ENCODE measurements at regions of chr2 and their contacts with region 1.

Region 1: DNA sequence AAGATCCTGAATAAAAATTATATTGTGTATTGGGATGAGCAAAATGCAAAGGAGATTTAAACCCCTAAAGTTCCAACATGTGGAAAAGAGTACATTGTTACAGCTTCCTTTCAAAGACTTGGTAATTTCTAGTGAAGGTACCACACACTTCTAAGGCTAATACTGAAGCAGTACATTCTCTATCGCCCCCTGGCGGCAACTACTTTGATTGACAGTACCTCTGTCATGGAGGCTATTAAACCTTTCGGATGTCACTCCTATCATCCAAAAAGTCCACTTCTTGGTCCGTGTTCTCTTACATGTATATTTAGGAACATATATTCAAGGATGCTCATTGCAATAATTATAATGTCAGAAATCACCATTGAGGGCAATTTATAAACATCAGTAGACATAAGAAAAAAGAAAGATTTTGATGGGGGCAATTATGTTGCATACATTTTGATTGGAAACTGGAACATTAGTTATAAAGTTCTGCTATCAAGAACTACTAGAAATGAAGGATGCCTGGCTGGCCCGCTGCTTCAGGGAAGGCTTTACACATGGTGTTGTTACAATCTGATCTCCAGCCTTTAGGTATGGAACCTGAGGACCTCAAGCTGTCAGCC is 601.6 kb downstream of the CPS1 start:
- DNase-seq: peak; percentile 45
- H3K4me3 Mint-ChIP-seq: no peak overlapping the region
- H3K27ac Mint-ChIP-seq: no peak overlapping the region
- H3K4me1 Mint-ChIP-seq: no peaks in the 10 kb centered on the region
- H3K27me3 Mint-ChIP-seq: no peaks in the 10 kb centered on the region

Region 2: DNA sequence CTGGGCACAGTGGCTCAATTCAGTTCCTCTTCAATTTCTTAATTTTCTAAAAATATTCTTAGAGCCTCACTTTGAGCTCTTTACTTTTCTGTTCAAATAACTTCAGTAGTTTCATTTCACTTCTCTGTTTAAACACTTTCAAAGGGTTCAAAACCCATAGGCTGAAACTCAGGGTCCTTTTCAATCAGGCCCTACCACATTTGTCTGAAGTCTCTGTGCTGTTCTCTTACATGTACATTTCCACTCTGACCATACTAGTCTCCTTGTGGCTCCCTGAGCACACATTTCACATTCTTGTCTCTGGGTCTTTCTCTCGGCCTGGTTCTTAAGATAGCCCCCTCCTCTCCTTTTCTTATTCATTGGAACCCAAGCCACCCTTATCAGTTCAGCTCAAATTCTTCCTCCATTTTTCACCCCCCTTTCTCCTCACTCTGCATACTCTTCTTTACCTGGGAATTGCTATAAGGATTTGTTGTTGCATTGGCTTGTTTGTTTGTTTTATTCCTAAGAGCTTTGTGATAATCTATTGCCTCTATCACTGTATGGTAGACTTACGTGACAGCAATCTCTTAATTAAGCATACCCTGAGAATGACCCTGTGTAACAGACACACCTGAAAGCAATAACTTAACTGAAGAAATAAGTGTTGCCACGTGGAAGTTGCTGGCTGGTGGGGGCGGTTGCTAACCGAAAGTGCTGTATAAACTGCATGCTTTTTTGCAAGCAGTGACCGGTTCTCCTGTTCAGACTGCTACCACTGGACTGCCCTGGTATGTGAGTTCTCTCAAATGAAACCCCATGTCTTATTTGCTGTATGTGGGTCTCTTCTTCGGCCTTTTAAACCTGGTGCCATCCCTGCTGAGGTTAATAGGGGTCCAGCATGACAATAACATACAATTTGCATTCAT is 905.0 kb before region 1 on chr2:
- intact Hi-C with region 1: loop called (anchors 2 kb)
- DNase-seq: no peak
- H3K4me3 Mint-ChIP-seq: no peak overlapping the region
- H3K27ac Mint-ChIP-seq: no peak overlapping the region
- H3K4me1 Mint-ChIP-seq: no peaks in the 10 kb centered on the region
- H3K27me3 Mint-ChIP-seq: peaks cover 2% of the 10 kb centered on the region

Region 3: DNA sequence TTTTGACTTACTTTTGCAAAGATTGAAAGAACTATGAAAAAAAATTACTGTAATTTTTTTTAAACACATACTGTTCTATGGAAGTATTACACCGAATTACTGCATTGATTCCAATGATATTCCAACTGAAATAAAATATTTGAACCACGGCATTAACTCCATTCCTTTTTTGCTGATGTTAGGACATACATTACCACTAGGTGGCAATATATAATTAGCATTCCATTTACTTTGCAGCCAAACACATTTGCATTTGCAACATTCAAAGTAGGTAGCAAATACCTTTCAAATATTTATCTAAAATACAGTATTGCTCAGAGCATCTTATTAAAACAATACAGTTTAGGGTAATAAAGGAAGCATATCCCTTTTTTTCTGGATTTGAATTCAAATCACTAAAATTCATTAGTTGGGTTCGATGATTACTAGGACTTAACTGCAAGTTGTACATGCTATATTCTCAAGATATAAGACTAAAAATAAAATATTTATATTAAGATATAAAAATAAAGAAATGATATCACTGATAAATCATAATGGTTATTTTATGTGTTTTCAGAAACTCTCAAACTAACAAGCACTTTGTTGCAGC is 712.7 kb before region 1 on chr2:
- intact Hi-C with region 1: loop called (anchors 10 kb)
- DNase-seq: no peak
- H3K4me3 Mint-ChIP-seq: no peak overlapping the region
- H3K27ac Mint-ChIP-seq: no peak overlapping the region
- H3K4me1 Mint-ChIP-seq: peaks cover 11% of the 10 kb centered on the region
- H3K27me3 Mint-ChIP-seq: no peaks in the 10 kb centered on the region

Region 4: GRCh38 chr2:210577263-210578071 is 580.5 kb before region 1 on chr2:
- intact Hi-C with region 1: loop called (anchors 5 kb)
- DNase-seq: no peak
- H3K4me3 Mint-ChIP-seq: no peak overlapping the region
- H3K27ac Mint-ChIP-seq: no peak overlapping the region
- H3K4me1 Mint-ChIP-seq: no peaks in the 10 kb centered on the region
- H3K27me3 Mint-ChIP-seq: no peaks in the 10 kb centered on the region

Region 5: DNA sequence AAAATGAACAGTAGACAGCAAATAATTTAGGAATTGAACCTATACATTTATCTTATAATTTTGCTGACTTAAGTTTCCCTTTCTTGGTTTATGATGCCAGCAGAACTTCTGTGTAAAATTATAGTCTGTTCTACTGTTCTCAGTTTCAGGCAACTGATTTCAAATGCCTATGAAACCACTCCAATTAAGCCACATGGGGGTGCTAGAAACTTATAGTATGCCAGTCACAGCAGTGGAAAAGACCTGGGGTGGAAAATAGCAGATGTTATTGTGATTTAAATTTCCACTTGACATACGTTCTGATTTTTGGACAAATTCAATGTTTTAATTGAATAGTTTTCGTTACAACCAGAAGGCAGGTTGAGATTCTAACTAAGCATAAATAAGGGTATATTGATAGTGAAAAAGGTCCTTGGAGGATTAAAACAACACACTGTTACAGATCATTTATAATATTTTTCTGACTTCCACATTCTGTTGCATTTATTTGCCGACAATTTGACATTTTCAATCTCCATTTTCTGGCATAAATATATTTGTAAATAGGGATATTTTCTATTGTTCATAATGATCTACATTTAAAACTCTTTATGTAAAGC is 540.1 kb before region 1 on chr2:
- intact Hi-C with region 1: loop called (anchors 5 kb)
- DNase-seq: no peak
- H3K4me3 Mint-ChIP-seq: no peak overlapping the region
- H3K27ac Mint-ChIP-seq: no peak overlapping the region
- H3K4me1 Mint-ChIP-seq: no peaks in the 10 kb centered on the region
- H3K27me3 Mint-ChIP-seq: no peaks in the 10 kb centered on the region

Region 6: GRCh38 chr2:211085056-211085680 is 72.8 kb before region 1 on chr2:
- intact Hi-C with region 1: loop called (anchors 5 kb)
- DNase-seq: no peak
- H3K4me3 Mint-ChIP-seq: no peak overlapping the region
- H3K27ac Mint-ChIP-seq: no peak overlapping the region
- H3K4me1 Mint-ChIP-seq: no peaks in the 10 kb centered on the region
- H3K27me3 Mint-ChIP-seq: no peaks in the 10 kb centered on the region